ENCODE measurements at regions of chr5 and their contacts with region 1.

Region 1: DNA sequence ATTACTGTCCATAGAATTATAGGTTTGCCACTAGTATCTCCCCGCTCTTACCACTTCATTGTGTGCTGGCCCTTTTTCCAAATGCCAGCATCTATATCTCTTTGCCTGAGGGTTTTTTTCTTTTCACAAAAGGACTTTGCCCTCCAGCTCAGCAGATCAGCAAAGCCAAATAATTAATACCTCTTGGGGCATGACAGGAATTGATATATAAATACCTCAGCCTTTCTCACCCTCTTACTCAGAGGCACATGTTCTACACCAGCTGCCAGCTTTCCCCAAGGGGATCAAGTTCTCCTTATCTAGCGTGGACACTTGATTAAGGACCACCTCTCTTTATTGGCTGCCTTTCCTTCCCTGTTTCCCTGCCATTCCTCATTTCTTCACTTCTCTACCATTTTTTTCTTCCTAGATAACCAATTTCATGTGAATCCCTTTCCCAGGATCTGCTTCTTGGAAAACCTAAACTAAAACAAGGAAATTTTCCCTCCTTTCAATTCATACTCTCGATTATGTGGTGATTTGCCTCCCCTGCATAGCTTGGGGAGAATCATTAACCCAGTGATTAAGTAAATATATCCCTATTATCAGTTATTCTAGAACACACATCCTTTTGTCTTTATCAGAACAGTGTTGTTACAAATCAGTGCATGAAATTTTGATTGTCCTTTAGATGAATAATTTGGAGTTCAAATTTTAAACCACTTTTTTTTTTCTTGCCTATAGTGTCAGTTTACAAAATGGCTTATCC is 6.9 kb upstream of the NUDT12 start:
- DNase-seq: no peak
- ATAC-seq: no peak
- H3K4me3 Mint-ChIP-seq: no peak overlapping the region
- H3K27ac Mint-ChIP-seq: no peak overlapping the region
- H3K4me1 Mint-ChIP-seq: no peaks in the 10 kb centered on the region
- H3K27me3 Mint-ChIP-seq: peaks cover 9% of the 10 kb centered on the region
- CTCF ChIP-seq: no peak

Region 2: GRCh38 chr5:103724271-103724670 is 154.8 kb after region 1 on chr5:
- CTCF ChIA-PET with region 1: no interaction called
- POLR2A ChIA-PET with region 1: no interaction called
- intact Hi-C with region 1: no loop called
- DNase-seq: no peak
- ATAC-seq: no peak
- H3K4me3 Mint-ChIP-seq: no peak overlapping the region
- H3K27ac Mint-ChIP-seq: no peak overlapping the region
- H3K4me1 Mint-ChIP-seq: no peaks in the 10 kb centered on the region
- H3K27me3 Mint-ChIP-seq: no peaks in the 10 kb centered on the region
- CTCF ChIP-seq: no peak

Region 3: GRCh38 chr5:104186100-104186499 is 616.6 kb after region 1 on chr5:
- CTCF ChIA-PET with region 1: no interaction called
- POLR2A ChIA-PET with region 1: no interaction called
- intact Hi-C with region 1: loop called (anchors 10 kb)
- DNase-seq: peak; percentile 3
- ATAC-seq: no peak
- H3K4me3 Mint-ChIP-seq: no peak overlapping the region
- H3K27ac Mint-ChIP-seq: no peak overlapping the region
- H3K4me1 Mint-ChIP-seq: no peaks in the 10 kb centered on the region
- H3K27me3 Mint-ChIP-seq: no peaks in the 10 kb centered on the region
- CTCF ChIP-seq: no peak